Activated naive CD4-positive, alpha-beta T cell treated with anti-CD3 and anti-CD28 coated beads for 36 hours (primary cell): ENCODE measurements at regions of chrX and their contacts with region 1.

Region 1: GRCh38 chrX:46882266-46882665 is 30.0 kb upstream of the JADE3 start:
- DNase-seq: no peak
- H3K4me3 Mint-ChIP-seq: no peak overlapping the region
- H3K27ac Mint-ChIP-seq: no peak overlapping the region
- H3K4me1 Mint-ChIP-seq: peaks cover 2% of the 10 kb centered on the region
- H3K27me3 Mint-ChIP-seq: no peaks in the 10 kb centered on the region

Region 2: DNA sequence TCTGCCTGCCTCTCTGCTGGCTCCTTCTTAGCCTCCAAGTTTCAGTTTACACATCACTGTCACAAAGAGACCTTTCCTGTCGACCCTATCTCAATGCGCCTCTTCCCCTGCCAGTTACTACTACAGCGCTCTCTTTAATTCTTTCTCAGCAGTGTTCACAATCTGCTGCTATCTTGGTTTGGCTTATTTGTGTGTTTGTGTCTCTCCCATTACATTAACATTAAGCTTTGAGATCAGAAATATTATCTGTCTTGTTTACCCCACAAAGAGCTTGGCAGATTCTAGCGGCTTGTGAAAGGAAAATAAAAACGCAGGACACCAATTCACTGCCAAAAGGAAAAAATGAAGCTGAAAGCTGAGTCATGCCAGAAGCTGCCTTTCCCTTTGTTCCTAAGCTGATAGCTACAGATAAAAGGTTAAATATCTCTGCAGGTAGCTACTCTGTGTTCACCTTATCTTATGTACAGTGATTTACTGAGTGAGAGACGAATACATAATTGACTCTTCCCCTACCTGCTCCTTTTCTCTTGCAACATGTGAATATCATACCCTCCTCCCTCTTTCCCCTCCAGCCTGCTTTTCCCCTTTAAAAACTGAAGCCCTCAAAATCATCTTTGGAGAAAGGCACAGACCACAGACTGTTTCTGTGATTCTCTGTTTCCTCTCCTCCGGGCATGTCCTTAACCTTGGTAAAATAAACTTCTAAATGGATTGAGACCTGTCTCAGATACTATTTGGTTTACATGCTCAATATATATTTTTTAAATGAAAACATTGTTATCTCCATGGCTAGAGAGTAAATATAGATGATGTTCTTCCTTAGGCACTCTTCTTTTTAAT is 104.1 kb before region 1 on chrX:
- CTCF ChIA-PET with region 1: interaction called, 10 read pairs
- intact Hi-C with region 1: no loop called
- DNase-seq: no peak
- H3K4me3 Mint-ChIP-seq: no peak overlapping the region
- H3K27ac Mint-ChIP-seq: no peak overlapping the region
- H3K4me1 Mint-ChIP-seq: peaks cover 14% of the 10 kb centered on the region
- H3K27me3 Mint-ChIP-seq: no peaks in the 10 kb centered on the region